PC-9 (cell line): ENCODE measurements at regions of chr7 and their contacts with region 1.

Region 1: GRCh38 chr7:111486472-111487142 is 75.7 kb downstream of the IMMP2L start:
- DNase-seq: no peak
- H3K4me3 ChIP-seq: no peak overlapping the region
- H3K27ac ChIP-seq: no peak overlapping the region
- H3K4me1 ChIP-seq: no peaks in the 10 kb centered on the region
- H3K27me3 ChIP-seq: no peaks in the 10 kb centered on the region
- CTCF ChIP-seq: peak; percentile 76

Region 2: GRCh38 chr7:109844362-109844761 is 1642.2 kb before region 1 on chr7:
- CTCF ChIA-PET with region 1: no interaction called
- POLR2A ChIA-PET with region 1: no interaction called
- intact Hi-C with region 1: loop called (anchors 10 kb)
- DNase-seq: peak in 1 of 2 experiments; percentile 5
- H3K4me3 ChIP-seq: no peak overlapping the region
- H3K27ac ChIP-seq: no peak overlapping the region
- H3K4me1 ChIP-seq: no peaks in the 10 kb centered on the region
- H3K27me3 ChIP-seq: no peaks in the 10 kb centered on the region
- CTCF ChIP-seq: peak; percentile 72

Region 3: GRCh38 chr7:111059833-111060232 is 426.8 kb before region 1 on chr7:
- CTCF ChIA-PET with region 1: no interaction called
- POLR2A ChIA-PET with region 1: no interaction called
- intact Hi-C with region 1: no loop called
- DNase-seq: no peak
- H3K4me3 ChIP-seq: no peak overlapping the region
- H3K27ac ChIP-seq: no peak overlapping the region
- H3K4me1 ChIP-seq: no peaks in the 10 kb centered on the region
- H3K27me3 ChIP-seq: no peaks in the 10 kb centered on the region
- CTCF ChIP-seq: no peak

Region 4: DNA sequence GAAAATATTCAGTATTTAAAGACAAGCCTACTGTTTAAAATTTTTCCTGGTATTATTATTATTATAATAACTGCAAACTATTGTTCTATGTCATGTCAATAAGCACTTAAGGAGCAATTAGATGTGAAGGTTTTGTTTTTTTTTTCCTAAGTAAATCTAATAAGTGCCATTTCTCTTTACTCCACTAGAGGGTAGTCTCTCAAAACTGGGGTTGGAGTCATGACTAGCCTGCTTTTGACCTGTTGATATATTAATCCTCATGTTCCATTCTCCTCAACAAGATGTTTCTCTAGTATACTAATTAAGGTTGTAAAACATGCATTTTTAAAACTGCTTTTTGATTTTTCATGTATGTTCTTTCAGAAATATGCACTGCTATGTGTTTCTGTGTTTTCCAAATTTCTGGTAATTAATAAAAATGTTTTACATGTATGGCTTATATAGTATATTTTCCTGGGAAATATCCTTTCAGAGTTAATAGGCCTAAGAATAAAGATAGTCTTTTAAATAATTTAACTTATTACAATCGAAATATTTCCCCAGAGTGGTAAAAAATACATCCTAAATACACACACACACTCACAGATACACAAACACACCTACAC is 396.7 kb before region 1 on chr7:
- CTCF ChIA-PET with region 1: no interaction called
- POLR2A ChIA-PET with region 1: no interaction called
- intact Hi-C with region 1: loop called (anchors 2 kb)
- DNase-seq: no peak
- H3K4me3 ChIP-seq: no peak overlapping the region
- H3K27ac ChIP-seq: no peak overlapping the region
- H3K4me1 ChIP-seq: no peaks in the 10 kb centered on the region
- H3K27me3 ChIP-seq: no peaks in the 10 kb centered on the region
- CTCF ChIP-seq: peak; percentile 82

Region 5: DNA sequence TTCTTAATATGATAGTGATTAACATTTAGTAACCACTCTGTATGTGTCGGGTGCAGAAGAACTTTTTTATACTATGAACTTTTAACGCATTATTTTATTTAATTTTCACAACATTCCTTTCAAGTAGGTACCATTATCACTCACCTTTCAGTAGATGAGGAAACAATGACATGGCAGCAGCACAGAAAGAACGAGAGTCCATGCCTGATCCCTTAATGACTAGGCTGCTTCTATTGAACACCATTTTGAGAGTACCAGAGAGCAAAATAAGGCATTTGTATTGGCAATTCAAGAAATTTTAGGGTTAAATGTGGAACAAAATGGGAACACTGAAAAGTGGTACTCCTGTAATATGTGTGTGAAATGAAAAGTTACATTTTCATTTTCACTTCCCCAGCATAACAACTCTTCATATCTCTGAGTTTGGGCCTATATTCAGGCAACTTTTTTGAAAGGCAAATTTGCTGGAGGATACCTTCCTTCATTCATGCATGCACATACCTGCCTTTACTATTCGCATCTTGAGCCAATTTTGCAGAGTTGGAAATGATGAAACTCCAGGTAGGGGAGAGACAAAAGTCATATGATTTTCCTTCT is 382.8 kb before region 1 on chr7:
- CTCF ChIA-PET with region 1: no interaction called
- POLR2A ChIA-PET with region 1: no interaction called
- intact Hi-C with region 1: no loop called
- DNase-seq: no peak
- H3K4me3 ChIP-seq: no peak overlapping the region
- H3K27ac ChIP-seq: no peak overlapping the region
- H3K4me1 ChIP-seq: peaks cover 7% of the 10 kb centered on the region
- H3K27me3 ChIP-seq: no peaks in the 10 kb centered on the region
- CTCF ChIP-seq: no peak

Region 6: GRCh38 chr7:111409714-111410422 is 76.7 kb before region 1 on chr7:
- CTCF ChIA-PET with region 1: no interaction called
- POLR2A ChIA-PET with region 1: no interaction called
- intact Hi-C with region 1: no loop called
- DNase-seq: no peak
- H3K4me3 ChIP-seq: no peak overlapping the region
- H3K27ac ChIP-seq: no peak overlapping the region
- H3K4me1 ChIP-seq: no peaks in the 10 kb centered on the region
- H3K27me3 ChIP-seq: no peaks in the 10 kb centered on the region
- CTCF ChIP-seq: no peak

Region 7: GRCh38 chr7:111561885-111562732 is 75.5 kb after region 1 on chr7 and contains the start of gene IMMP2L:
- CTCF ChIA-PET with region 1: no interaction called
- POLR2A ChIA-PET with region 1: no interaction called
- intact Hi-C with region 1: no loop called
- DNase-seq: peak; percentile 54 to 95
- H3K4me3 ChIP-seq: peak within 1 kb of the TSS; percentile 69
- H3K27ac ChIP-seq: peak within 1 kb of the TSS; percentile 61
- H3K4me1 ChIP-seq: peaks cover 20% of the 10 kb centered on the region
- H3K27me3 ChIP-seq: no peaks in the 10 kb centered on the region
- CTCF ChIP-seq: no peak; the same call in 1 of the 2 replicates
- total RNA-seq, gene IMMP2L: 40.5 and 51.0 TPM in 2 replicates

Region 8: GRCh38 chr7:111671927-111672326 is 185.3 kb after region 1 on chr7:
- CTCF ChIA-PET with region 1: interaction called, 10 read pairs
- POLR2A ChIA-PET with region 1: no interaction called
- intact Hi-C with region 1: no loop called
- DNase-seq: no peak
- H3K4me3 ChIP-seq: no peak overlapping the region
- H3K27ac ChIP-seq: no peak overlapping the region
- H3K4me1 ChIP-seq: no peaks in the 10 kb centered on the region
- H3K27me3 ChIP-seq: no peaks in the 10 kb centered on the region
- CTCF ChIP-seq: no peak